ENCODE measurements at regions of chr5 and their contacts with region 1.

Region 1: DNA sequence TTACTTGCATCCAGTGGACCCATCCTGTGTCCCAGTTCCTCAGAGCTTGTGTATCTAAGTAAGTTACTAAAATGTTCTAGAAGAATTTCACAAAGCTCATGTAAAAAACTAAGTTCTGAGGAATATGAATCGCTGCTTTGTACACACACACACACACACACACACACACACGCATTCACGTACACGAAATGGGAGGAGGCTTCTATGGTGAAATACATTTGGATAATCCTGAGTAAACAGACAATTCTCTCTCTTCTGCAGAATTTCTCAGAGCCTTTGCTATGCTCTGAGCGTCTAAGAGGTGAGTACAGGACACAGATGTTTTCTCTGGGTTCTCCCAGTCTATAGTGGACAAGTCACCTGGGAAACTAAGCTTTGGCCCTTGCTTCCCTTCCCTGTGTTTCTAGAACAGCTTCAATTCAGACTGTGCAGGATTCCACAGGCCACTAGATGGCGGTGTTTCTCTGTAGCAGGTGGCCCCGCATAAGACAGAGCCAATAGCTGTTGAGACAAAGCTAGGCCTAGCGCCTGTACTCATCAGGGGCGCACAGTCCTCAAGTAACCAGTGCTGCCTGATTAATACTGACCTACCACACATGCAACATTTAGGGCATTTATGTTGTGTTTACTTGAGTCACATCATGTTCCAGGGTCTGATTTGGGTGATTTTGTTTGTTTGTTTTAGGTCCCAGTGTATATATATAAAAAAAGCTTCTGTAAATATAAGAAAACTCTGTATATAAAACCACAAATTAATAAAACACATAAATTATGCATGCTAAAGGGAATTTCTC is 114.8 kb downstream of the LIFR start:
- DNase-seq: peak; percentile 98
- ATAC-seq: peak; percentile 99
- H3K4me3 ChIP-seq: no peak overlapping the region
- H3K27ac ChIP-seq: no peak overlapping the region
- H3K4me1 ChIP-seq: no peaks in the 10 kb centered on the region
- H3K27me3 ChIP-seq: no peaks in the 10 kb centered on the region
- CTCF ChIP-seq: peak; percentile 99

Region 2: DNA sequence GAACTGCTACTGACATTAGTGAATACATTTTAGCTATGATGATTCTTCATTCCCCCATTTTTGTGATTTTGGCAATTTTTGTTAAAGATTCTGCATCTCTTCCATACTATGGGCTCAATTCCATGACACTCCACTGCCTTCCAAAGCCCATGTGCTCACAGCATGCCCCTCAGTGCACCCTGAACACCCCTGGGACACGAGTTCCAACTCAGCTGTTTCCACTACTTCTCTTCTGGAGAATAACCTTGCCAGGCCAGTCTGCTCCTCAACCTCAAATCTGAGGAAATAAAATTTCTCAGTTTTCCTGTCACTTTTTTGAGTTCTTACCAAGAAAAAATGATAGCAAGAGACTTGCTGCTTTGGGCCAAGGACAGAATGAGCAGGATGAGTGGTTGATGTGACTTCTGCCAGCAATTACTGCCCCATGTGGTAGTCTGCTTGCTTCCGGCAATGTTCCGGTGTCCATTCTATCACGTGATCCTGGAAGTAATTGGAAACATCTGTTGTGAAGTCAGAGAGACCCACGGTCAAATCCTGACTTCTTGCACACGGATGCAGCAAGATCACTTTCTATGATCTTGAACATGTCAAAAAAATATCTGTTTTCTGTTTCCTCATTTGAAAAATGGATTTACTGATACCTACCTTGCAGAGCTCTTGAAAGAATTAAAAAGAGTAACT is 125.0 kb before region 1 on chr5:
- CTCF ChIA-PET with region 1: no interaction called
- POLR2A ChIA-PET with region 1: no interaction called
- intact Hi-C with region 1: no loop called
- DNase-seq: no peak
- ATAC-seq: no peak
- H3K4me3 ChIP-seq: no peak overlapping the region
- H3K27ac ChIP-seq: no peak overlapping the region
- H3K4me1 ChIP-seq: no peaks in the 10 kb centered on the region
- H3K27me3 ChIP-seq: peaks cover 59% of the 10 kb centered on the region
- CTCF ChIP-seq: no peak

Region 3: DNA sequence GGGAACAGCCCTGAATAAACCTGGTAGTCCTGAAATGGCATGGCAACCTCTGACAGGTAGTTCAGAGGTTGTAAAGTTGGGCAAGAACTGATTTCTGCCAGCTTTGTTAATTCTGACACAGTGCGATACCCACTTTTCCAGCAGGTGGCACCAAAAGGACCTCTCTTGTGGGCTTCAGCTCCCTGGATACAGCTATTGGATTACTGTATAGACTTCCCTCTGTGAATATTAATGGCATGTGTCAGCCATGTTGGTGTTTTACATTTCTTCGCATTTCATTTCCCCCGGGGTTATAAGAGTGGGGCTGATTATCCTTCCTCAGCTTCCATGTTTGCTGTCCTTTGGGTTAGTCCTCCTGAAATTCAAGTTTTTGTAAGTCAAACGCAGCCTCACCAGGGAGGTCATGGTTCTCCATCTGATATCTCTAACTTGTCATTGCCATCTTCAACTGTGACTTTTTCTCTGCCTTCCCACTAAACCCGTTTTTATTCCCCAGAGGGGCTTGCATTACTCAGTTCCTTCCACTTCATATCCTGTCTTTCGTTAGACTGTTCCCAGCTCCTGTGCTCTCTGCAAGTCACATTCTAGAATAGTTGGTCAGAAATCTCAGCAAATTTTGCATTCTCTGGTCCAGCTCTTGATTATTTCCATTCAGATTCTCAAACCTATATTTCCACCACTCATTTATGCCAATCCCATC is 20.8 kb before region 1 on chr5:
- CTCF ChIA-PET with region 1: interaction called, 29 read pairs
- POLR2A ChIA-PET with region 1: no interaction called
- intact Hi-C with region 1: no loop called
- DNase-seq: peak; percentile 83
- ATAC-seq: peak; percentile 87
- H3K4me3 ChIP-seq: no peak overlapping the region
- H3K27ac ChIP-seq: no peak overlapping the region
- H3K4me1 ChIP-seq: peaks cover 5% of the 10 kb centered on the region
- H3K27me3 ChIP-seq: peaks cover 3% of the 10 kb centered on the region; the same call in 1 of the 2 replicates
- CTCF ChIP-seq: peak; percentile 92

Region 4: DNA sequence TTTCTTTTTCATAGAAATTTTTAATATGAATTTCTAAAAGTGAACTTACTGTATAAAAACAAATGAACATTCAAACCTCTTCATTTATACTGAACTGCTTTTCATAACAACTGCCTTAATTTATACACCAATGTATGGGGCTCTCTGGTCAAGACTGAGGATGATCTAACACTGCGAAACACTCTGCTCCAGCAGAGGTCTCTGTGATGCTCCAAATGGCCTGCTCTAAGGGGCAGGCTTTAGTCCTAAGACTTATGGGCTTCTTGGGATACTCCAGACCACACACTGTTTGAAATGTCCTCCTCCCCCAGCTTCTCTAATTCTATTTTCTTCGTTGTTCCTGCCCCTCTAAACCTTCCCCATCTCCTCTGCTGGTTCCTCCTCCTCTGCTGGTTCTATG is 56.3 kb after region 1 on chr5:
- CTCF ChIA-PET with region 1: interaction called, 6 read pairs
- POLR2A ChIA-PET with region 1: no interaction called
- intact Hi-C with region 1: loop called (anchors 5 kb)
- DNase-seq: peak; percentile 52
- ATAC-seq: peak; percentile 88
- H3K4me3 ChIP-seq: no peak overlapping the region
- H3K27ac ChIP-seq: no peak overlapping the region
- H3K4me1 ChIP-seq: peaks cover 7% of the 10 kb centered on the region
- H3K27me3 ChIP-seq: no peaks in the 10 kb centered on the region
- CTCF ChIP-seq: peak; percentile 62

Region 5: DNA sequence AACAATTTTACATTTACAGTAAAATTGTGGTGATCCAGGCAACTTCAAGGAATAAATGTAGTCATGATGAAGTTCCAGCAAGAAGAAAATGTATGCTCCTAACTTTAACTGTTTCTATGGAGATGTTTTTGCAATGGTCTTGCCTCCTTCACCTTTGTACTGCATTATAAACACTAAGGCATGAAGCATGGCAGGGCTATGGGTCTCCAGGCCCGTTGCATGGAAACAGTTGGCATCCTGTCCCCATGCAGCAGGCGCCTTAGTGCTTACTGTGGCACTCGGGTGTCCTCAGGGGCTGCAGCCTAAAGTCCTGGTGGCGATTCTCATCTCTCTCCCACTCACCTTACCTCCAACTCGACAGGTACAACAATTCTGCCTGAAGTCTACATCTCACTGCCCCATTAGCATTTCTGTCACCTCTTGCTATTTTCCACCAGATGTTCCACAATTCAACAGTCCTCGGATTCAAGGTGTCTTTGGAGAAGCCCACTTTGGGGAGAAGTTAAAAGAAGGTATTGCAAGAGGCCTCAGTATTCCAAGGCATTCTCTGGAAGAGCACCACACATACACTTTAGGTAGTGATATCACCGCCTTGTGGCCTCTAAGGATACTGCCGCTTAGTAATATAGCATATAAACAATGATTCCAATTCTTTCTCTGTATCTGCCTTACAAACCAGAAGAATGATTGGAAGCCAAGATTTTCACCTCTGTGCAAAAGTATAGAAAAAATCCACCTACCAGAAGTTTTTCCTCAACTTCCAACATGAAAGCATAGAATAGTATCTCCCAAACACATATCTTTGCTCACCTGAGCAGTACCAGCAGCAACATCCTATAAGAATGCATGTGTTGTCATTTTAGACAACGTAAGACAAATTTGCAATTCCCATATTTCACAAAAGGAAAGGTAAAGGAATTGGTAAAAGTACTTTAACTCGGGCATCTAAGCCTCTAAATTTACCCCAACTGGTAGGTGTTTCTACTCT is 109.7 kb after region 1 on chr5:
- CTCF ChIA-PET with region 1: interaction called, 13 read pairs
- POLR2A ChIA-PET with region 1: no interaction called
- intact Hi-C with region 1: loop called (anchors 1 kb)
- DNase-seq: peak; percentile 80
- ATAC-seq: peak; percentile 21; the same call in 1 of the 2 replicates
- H3K4me3 ChIP-seq: no peak overlapping the region
- H3K27ac ChIP-seq: no peak overlapping the region
- H3K4me1 ChIP-seq: peaks cover 43% of the 10 kb centered on the region
- H3K27me3 ChIP-seq: no peaks in the 10 kb centered on the region
- CTCF ChIP-seq: peak; percentile 90

Region 6: GRCh38 chr5:38739007-38739743 is 297.5 kb after region 1 on chr5:
- CTCF ChIA-PET with region 1: interaction called, 4 read pairs
- POLR2A ChIA-PET with region 1: no interaction called
- intact Hi-C with region 1: loop called (anchors 5 kb)
- DNase-seq: peak; percentile 95
- ATAC-seq: peak; percentile 97
- H3K4me3 ChIP-seq: peak overlapping the region; percentile 20; the same call in 1 of the 2 replicates
- H3K27ac ChIP-seq: peak overlapping the region; percentile 83
- H3K4me1 ChIP-seq: peaks cover 21% of the 10 kb centered on the region
- H3K27me3 ChIP-seq: no peaks in the 10 kb centered on the region
- CTCF ChIP-seq: no peak

Region 7: GRCh38 chr5:38922199-38922598 is 480.5 kb after region 1 on chr5:
- CTCF ChIA-PET with region 1: interaction called, 15 read pairs
- POLR2A ChIA-PET with region 1: no interaction called
- intact Hi-C with region 1: loop called (anchors 1 kb)
- DNase-seq: peak; percentile 73
- ATAC-seq: peak; percentile 98
- H3K4me3 ChIP-seq: no peak overlapping the region
- H3K27ac ChIP-seq: no peak overlapping the region
- H3K4me1 ChIP-seq: no peaks in the 10 kb centered on the region
- H3K27me3 ChIP-seq: no peaks in the 10 kb centered on the region
- CTCF ChIP-seq: peak; percentile 99